Left ventricle myocardium inferior (tissue), 1 donor: ENCODE measurements at regions of chr14 and their contacts with region 1.

Region 1: GRCh38 chr14:61252369-61253063 is 28.6 kb downstream of the TMEM30B start:
- DNase-seq: peak; percentile 54
- H3K4me3 ChIP-seq: no peak overlapping the region
- H3K27ac ChIP-seq: no peak overlapping the region
- H3K4me1 ChIP-seq: no peaks in the 10 kb centered on the region
- H3K27me3 ChIP-seq: peaks cover 6% of the 10 kb centered on the region
- CTCF ChIP-seq: peak; percentile 90

Region 2: GRCh38 chr14:60349663-60350365 is 902.7 kb before region 1 on chr14:
- intact Hi-C with region 1: loop called (anchors 5 kb)
- DNase-seq: no peak
- H3K4me3 ChIP-seq: peak overlapping the region; percentile 14
- H3K27ac ChIP-seq: no peak overlapping the region
- H3K4me1 ChIP-seq: peaks cover 8% of the 10 kb centered on the region
- H3K27me3 ChIP-seq: no peaks in the 10 kb centered on the region
- CTCF ChIP-seq: peak; percentile 75

Region 3: DNA sequence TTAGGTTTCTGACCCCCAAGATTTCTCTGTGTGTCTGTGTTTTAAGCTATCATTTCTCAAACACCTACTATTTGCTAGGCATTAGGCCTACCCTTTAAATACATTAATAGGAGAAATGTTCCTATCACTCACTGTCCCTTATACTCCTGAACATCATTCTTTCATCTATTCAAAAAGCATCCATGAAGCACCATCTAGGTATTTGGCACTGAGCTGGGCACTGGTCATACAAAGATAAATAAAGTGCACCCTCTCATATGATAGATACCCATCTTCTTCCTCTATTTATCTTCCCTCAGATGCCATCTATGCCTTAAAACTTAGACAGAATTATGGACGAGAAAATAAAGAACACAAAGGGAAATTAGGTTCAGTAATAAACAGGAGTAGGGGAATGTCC is 623.6 kb before region 1 on chr14:
- intact Hi-C with region 1: loop called (anchors 5 kb)
- DNase-seq: no peak
- H3K4me3 ChIP-seq: no peak overlapping the region
- H3K27ac ChIP-seq: no peak overlapping the region
- H3K4me1 ChIP-seq: no peaks in the 10 kb centered on the region
- H3K27me3 ChIP-seq: peaks cover 80% of the 10 kb centered on the region
- CTCF ChIP-seq: no peak

Region 4: DNA sequence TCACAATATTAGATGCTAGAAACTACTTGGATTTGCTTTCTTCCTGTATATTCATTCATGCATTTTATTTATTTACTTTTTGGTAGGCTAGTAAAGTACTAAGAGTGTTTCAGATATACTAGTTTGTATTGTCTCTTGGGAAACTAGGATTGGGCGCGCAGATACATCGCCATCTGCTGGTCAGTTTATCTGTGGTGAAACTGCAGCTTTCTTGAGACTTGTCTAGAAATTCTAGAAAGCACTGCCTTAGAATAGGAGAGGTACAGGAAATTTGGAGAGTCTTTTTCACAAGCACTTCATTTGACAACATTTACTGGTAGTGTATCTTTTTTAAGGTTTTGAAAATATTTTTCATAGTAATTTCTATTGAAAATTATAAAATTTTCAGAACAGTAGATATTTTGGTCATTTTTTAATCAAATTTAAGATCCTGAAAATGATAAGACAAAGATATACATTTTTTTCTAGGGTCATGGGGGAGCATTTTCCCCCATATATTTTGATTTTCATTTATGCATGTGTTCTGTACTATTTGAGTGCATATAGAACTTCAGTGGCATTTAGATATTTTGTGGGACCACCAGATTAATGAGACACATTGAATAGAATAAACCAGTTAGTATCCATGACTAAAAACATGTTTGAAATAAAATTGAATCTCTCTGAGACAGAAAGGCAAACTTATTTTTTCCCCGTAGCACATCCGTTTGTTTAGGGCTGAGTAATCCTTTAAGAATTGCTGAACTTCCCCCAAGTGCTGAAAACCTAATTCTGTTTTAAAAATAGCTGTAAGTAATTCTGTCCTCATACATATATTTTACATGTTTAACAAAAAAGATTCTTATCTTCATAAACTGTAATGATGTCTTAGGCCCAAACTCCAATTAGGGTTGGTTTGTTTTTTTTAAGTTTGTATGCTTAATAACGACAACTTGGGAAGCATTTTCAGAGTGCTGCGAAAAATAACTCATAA is 227.0 kb before region 1 on chr14:
- intact Hi-C with region 1: loop called (anchors 10 kb)
- DNase-seq: peak; percentile 18
- H3K4me3 ChIP-seq: no peak overlapping the region
- H3K27ac ChIP-seq: no peak overlapping the region
- H3K4me1 ChIP-seq: no peaks in the 10 kb centered on the region
- H3K27me3 ChIP-seq: no peaks in the 10 kb centered on the region
- CTCF ChIP-seq: peak; percentile 93